GM10248 (cell line): ENCODE measurements at regions of chr16 and their contacts with region 1.

Region 1: GRCh38 chr16:3716831-3717234 is 491 bp downstream of the TRAP1 start:
- DNase-seq: peak; percentile 49
- CTCF ChIP-seq: no peak

Region 2: GRCh38 chr16:3690470-3690928 is 26.3 kb before region 1 on chr16:
- CTCF ChIA-PET with region 1: interaction called, 14 read pairs
- POLR2A ChIA-PET with region 1: interaction called, 3 read pairs
- DNase-seq: peak; percentile 89
- CTCF ChIP-seq: peak; percentile 87

Region 3: DNA sequence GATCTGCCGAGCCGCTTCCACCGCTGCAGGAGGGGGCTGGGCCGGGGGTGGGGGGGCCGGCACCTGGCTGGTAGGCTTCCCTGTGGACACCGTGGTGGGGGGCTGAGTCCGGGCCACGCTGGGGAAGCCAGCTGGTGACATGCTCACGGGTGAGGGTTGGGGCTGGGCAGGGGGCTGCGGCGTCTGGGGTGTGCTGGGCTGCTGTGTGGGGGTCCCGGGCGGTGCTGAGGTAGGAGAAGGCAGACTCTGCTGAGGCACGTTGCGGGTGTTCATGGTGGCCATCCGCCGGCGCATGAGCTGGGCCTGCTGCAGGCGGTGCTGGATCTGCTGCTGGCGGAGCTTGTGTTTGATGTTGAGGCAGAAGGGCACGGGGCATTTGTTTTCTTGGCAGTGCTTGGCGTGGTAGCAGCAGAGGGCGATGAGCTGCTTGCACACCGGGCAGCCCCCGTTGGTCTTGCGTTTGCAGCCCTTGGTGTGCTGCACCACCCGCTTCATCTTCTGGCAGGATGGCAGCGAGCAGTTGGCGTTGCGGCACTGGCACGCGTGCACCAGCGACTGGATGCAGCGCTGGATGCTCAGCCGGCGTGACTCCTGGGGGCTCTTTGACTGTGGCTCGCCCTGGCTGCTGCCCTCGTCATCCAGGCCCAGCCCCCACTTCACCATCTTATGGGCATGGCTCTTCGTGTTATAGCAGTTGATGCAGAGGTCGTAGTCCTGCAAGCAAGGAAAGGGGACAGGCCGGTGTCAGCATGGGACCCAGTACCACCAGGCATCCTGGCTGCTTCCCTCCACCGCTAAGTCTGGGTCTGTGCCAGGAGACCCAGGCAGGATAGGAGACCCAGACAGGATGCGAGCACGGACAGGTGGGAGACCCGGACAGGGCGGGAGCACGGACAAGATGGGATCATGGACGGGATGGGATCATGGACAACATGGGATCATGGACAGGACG is 12.6 kb after region 1 on chr16:
- CTCF ChIA-PET with region 1: no interaction called
- POLR2A ChIA-PET with region 1: no interaction called
- DNase-seq: no peak
- CTCF ChIP-seq: no peak